ENCODE measurements at regions of chr16 and their contacts with region 1.

Region 1: GRCh38 chr16:73047518-73048291 is at the start of gene ZFHX3:
- DNase-seq: peak; percentile 79
- H3K4me3 ChIP-seq: peak within 1 kb of the TSS; percentile 55 to 95 (median 72)
- H3K27ac ChIP-seq: peak within 1 kb of the TSS; percentile 92 to 96 (median 96)
- H3K4me1 ChIP-seq: peaks cover 33 to 83% (median 66%) of the 10 kb centered on the region in 4 donors
- H3K27me3 ChIP-seq: no peaks in the 10 kb centered on the region
- CTCF ChIP-seq: peak in 1 of 5 experiments; percentile 10
- EP300 ChIP-seq: no peak
- POLR2A ChIP-seq: peak; percentile 44
- total RNA-seq, gene ZFHX3: 12.3 to 23.7 (median 15.3) TPM

Region 2: GRCh38 chr16:72938795-72939164 is 108.9 kb before region 1 on chr16:
- in situ Hi-C with region 1: no loop called
- intact Hi-C with region 1: loop called (anchors 10 kb)
- DNase-seq: peak; percentile 56
- H3K4me3 ChIP-seq: no peak overlapping the region
- H3K27ac ChIP-seq: peak overlapping the region; percentile 73 to 83 (median 74)
- H3K4me1 ChIP-seq: peaks cover 12 to 37% (median 23%) of the 10 kb centered on the region in 4 donors
- H3K27me3 ChIP-seq: no peaks in the 10 kb centered on the region
- CTCF ChIP-seq: no peak
- EP300 ChIP-seq: no peak
- POLR2A ChIP-seq: no peak